ENCODE measurements at regions of chr11 and their contacts with region 1.

Region 1: DNA sequence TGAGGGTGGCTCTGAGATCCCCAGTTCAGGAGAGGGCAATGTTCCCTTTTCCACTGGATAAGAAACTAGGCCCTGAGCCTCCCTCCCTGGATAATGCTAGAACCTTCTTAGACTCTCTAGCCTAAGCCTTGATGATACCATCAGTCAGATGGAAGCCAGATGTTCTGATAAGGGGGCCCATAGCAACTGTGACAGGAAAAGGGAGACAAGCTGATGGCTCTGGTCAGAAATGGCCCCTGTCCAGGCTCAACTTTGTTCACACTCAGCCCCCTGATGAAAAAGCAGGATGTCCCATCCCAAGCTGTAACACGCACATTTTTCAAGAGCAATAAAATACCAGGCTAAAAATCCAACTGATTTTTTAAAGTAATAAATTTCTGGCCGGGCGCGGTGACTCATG is 7.2 kb upstream of the OAF start:
- DNase-seq: no peak
- H3K4me3 ChIP-seq: no peak overlapping the region
- H3K27ac ChIP-seq: no peak overlapping the region
- H3K4me1 ChIP-seq: no peaks in the 10 kb centered on the region
- H3K27me3 ChIP-seq: no peaks in the 10 kb centered on the region
- CTCF ChIP-seq: no peak
- POLR2A ChIP-seq: no peak

Region 2: DNA sequence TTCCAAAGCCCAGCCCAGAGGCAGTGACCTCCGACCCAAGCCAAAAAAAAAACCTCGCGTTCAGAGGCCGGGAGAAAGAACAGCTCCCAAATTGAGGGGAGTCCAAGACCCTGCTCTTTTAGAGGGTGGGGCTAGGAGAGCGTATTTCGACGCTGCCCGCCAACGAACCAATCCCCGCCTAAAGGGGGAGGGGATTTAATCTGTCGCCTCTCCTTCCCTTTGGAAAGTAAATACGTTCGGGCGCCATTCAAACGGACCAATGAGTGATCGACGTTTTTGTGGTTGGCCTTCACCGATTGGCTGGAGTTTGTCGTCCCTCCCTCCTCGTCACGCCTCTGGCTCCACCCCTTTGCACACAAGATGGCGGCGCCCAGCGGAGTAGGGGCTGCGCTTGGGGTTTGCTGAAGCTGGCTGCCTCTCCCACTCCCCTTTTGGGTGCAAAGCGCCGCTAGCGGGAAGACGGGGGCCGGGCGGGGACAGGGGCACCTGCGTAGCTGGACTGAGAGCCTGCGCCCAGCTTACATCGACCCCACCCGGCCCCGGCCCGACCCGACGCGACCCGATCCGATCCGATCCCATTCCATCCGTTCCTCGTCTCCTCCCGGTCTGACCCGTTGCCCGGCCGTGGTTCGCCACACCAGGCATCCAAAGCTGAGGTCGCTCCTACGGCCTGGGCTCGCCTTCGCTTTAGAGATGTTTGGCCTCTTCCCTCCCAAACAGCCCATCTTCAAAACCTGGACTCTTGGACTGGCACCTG is 869.3 kb before region 1 on chr11 and contains the start of gene RNF26:
- intact Hi-C with region 1: no loop called
- DNase-seq: peak; percentile 95 to 98
- H3K4me3 ChIP-seq: peak within 1 kb of the TSS; percentile 86 to 99 (median 87)
- H3K27ac ChIP-seq: peak within 1 kb of the TSS; percentile 94 to 95
- H3K4me1 ChIP-seq: peaks cover 8% of the 10 kb centered on the region in 2 donors
- H3K27me3 ChIP-seq: no peaks in the 10 kb centered on the region
- CTCF ChIP-seq: peak in 1 of 3 donors; percentile 16
- POLR2A ChIP-seq: peak; percentile 69
- total RNA-seq, gene RNF26: 8.8 to 11.2 (median 9.7) TPM

Region 3: DNA sequence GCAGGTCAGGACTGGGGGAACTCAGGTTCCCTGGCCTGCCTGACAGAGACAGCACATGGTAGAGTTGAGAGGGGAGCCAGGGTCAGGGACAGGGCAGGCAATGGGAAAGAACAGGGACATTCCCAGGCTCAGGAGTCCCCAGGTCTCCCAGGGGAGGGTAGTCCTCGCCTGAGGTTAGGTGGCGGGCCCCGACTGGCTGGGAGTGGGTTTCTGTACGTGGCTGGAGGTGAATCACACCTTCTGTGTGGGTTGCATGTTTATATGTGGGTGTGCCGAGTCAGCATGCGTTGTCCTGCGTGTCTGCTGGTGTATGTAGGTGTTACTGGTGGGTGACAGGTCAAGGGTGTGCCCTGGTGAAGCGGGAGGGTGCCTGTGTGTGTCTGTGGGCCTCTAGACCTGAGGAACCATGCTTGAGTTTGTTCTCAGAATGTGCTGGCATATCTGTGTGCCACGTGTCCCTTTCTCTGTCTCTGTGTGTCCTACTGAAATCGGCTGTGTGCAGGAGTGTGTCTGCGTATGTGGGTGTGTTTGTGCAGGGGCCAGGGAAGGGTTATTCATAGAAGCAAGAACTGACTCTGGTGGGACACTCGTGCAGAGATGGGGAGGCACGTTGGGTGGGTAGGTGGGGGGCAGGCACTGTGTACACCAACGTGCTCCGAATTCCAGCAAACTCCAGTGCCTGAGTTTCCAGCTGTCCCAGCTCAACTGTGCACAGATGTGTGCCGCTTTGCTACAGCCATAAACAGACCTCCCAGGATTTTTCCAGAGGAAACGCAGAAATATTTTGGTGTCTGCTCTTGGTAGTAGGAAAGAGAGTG is 16.6 kb before region 1 on chr11:
- intact Hi-C with region 1: no loop called
- DNase-seq: no peak
- H3K4me3 ChIP-seq: no peak overlapping the region
- H3K27ac ChIP-seq: peak overlapping the region; percentile 50 to 96
- H3K4me1 ChIP-seq: no peaks in the 10 kb centered on the region
- H3K27me3 ChIP-seq: no peaks in the 10 kb centered on the region
- CTCF ChIP-seq: no peak
- POLR2A ChIP-seq: no peak

Region 4: GRCh38 chr11:120249279-120250262 is 45.9 kb after region 1 on chr11:
- intact Hi-C with region 1: loop called (anchors 2 kb)
- DNase-seq: no peak
- H3K4me3 ChIP-seq: no peak overlapping the region
- H3K27ac ChIP-seq: peak overlapping the region in 1 of 2 donors; percentile 23
- H3K4me1 ChIP-seq: no peaks in the 10 kb centered on the region
- H3K27me3 ChIP-seq: no peaks in the 10 kb centered on the region
- CTCF ChIP-seq: no peak
- POLR2A ChIP-seq: no peak